ENCODE measurements at regions of chr1 and their contacts with region 1.

Region 1: DNA sequence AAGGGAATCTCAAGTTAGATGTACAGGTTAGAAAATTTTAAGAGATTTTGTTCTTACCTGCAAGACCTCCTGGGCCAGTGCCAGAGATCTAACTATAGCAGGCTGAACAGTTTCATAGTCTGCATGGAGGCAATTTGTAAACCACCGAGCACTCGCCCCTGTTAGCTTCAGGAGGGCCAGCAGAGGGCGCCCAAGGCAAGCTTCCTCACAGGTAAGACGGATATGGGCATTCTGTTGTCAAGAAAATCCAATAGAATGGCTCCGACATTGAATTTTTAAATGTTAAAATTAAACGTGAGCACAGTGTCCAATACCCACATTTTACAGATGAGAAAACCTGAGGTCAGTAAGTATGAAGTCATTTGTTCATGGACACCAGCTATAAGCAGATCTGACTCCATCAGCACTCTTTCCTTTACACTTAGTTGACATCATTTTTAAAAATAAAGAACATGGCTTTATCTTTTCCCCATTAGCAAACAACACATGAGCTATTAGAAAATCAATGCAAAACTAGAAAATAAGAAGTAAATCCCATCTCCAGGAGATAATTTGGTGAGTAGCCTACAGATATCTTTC is 2.2 kb downstream of the REG4 start:
- DNase-seq: peak; percentile 76
- H3K4me3 Mint-ChIP-seq: no peak overlapping the region
- H3K27ac Mint-ChIP-seq: no peak overlapping the region
- H3K4me1 Mint-ChIP-seq: no peaks in the 10 kb centered on the region
- H3K27me3 Mint-ChIP-seq: peaks cover 53% of the 10 kb centered on the region
- CTCF ChIP-seq: peak; percentile 92

Region 2: DNA sequence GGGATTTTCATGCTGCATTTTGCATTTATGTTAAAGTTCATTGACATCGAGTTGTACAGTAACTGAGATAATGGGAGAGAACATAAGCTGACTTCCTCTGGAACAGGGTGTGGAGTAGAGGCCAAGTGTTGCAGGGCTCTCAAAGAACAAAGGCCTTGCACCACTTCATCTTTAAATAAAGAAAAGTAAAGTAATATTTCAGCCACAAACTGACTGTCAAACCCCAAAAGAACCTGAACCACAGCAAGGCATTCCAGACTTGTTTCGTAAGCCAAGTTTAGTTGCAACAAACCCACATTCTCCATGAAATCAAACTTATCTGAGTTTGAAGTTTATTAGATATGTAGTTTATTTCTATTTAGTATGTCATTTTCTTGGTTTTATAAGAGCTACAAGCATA is 21.3 kb before region 1 on chr1:
- CTCF ChIA-PET with region 1: interaction called, 11 read pairs
- POLR2A ChIA-PET with region 1: interaction called, 3 read pairs
- intact Hi-C with region 1: no loop called
- DNase-seq: no peak
- H3K4me3 Mint-ChIP-seq: no peak overlapping the region
- H3K27ac Mint-ChIP-seq: no peak overlapping the region
- H3K4me1 Mint-ChIP-seq: peaks cover 30% of the 10 kb centered on the region
- H3K27me3 Mint-ChIP-seq: no peaks in the 10 kb centered on the region
- CTCF ChIP-seq: no peak

Region 3: DNA sequence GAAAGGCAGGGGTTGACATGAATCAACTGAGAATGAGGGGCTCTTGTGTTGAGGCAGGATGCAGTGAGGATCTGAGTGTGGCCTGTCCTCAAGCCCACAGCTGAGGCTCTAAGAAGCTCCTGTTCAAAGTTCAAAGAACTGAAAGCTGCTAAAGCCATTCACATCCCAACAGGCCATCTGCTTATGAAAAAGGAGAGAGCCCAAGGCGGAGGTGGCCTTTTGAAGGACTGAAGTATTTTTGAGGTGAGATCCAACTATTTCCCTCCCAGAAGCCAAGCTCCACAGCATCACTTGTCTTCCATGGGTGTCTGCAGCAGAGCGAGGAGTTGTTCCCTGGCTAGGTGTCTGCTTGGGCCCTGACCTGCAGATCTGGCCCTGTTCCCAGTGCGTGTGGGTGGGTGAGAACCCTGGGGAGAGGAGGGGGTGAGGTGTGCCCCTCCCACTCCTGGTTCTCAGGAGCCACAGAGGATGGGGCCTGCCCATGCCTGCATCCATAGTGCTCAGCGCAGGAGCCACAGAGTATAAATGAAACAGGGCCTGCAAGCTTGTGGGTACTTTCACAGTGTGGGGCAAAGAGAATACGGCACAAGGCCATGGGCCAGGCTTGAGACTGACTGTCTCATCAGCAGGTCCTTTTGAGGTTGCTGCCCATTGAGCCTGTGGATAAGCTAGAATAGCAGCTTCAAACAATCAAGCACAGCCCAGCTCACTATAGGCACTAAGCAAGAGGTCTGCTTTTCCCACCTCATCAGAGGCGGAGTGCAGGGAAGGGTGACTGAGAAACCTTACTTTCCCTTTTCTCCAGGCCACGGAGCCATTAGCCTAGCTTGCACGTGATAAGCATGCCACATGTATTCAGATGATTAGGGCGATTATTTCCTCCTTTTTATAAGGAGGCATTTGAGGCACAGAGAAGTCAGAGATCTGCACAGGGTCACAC is 13.5 kb before region 1 on chr1:
- CTCF ChIA-PET with region 1: interaction called, 12 read pairs
- POLR2A ChIA-PET with region 1: interaction called, 3 read pairs
- intact Hi-C with region 1: no loop called
- DNase-seq: peak; percentile 32
- H3K4me3 Mint-ChIP-seq: no peak overlapping the region
- H3K27ac Mint-ChIP-seq: no peak overlapping the region
- H3K4me1 Mint-ChIP-seq: peaks cover 6% of the 10 kb centered on the region
- H3K27me3 Mint-ChIP-seq: no peaks in the 10 kb centered on the region
- CTCF ChIP-seq: no peak

Region 4: DNA sequence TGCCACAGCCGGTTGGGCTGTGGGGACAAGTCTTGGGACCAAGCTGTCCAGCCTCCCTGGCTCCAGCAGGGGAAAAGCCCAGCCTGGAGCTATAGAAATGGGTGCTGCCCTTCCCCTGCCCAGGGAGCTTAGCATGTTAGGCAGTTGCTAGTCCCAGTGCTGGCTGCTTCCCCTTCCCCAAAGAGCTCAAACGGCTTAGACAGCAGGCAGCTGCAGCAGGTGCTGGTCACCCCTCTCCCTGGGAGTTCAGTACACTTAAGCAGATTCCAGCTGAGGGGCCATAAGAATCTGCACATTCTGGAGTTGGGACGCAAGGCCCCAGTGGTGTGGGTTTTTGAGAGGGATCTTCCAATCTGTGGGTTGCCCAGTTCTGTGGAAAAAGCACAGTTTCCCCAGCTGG is 13.3 kb after region 1 on chr1:
- CTCF ChIA-PET with region 1: interaction called, 18 read pairs
- POLR2A ChIA-PET with region 1: interaction called, 4 read pairs
- intact Hi-C with region 1: no loop called
- DNase-seq: no peak
- H3K4me3 Mint-ChIP-seq: no peak overlapping the region
- H3K27ac Mint-ChIP-seq: no peak overlapping the region
- H3K4me1 Mint-ChIP-seq: no peaks in the 10 kb centered on the region
- H3K27me3 Mint-ChIP-seq: peaks cover 2% of the 10 kb centered on the region
- CTCF ChIP-seq: no peak

Region 5: GRCh38 chr1:119870917-119871596 is 62.0 kb after region 1 on chr1:
- CTCF ChIA-PET with region 1: interaction called, 10 read pairs
- POLR2A ChIA-PET with region 1: interaction called, 3 read pairs
- intact Hi-C with region 1: loop called (anchors 1 kb)
- DNase-seq: peak; percentile 77
- H3K4me3 Mint-ChIP-seq: no peak overlapping the region
- H3K27ac Mint-ChIP-seq: peak overlapping the region; percentile 59
- H3K4me1 Mint-ChIP-seq: peaks cover 6% of the 10 kb centered on the region
- H3K27me3 Mint-ChIP-seq: no peaks in the 10 kb centered on the region
- CTCF ChIP-seq: peak; percentile 98

Region 6: GRCh38 chr1:119987112-119987511 is 178.1 kb after region 1 on chr1:
- CTCF ChIA-PET with region 1: no interaction called
- POLR2A ChIA-PET with region 1: no interaction called
- intact Hi-C with region 1: no loop called
- DNase-seq: peak; percentile 86
- H3K4me3 Mint-ChIP-seq: peak overlapping the region; percentile 4
- H3K27ac Mint-ChIP-seq: peak overlapping the region; percentile 91
- H3K4me1 Mint-ChIP-seq: peaks cover 44% of the 10 kb centered on the region
- H3K27me3 Mint-ChIP-seq: no peaks in the 10 kb centered on the region
- CTCF ChIP-seq: no peak

Region 7: DNA sequence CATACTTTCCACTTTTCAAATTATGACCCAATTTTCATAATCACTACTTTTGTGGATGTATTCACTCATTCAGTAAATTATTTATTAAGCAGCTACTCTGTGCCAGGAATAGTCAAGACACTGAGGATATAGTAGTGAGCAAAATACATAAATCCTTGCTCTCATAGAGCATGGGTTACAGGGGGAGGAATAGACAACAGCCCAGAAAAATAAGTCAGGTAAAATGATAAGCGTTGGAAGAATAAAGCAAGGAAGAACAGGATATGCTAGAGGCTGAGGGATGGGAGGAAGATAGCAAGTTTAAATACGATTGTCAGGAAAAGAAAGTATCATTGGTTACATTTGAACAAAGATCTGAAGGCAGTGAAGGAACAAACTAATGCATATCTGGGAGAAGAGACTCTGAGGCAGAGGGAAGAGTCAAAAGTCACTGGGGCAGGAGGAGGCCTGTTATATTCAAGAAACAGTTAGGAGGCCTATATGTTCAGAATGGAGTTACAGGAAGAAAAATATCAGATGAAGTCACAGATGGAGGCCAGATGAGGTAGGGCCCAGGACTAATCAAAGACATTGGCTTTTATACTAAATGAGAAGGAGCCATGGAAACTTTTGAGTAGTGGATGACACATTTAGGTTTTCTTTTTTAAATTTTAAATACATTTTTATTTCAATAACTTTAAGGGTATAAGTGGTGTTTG is 324.3 kb after region 1 on chr1:
- CTCF ChIA-PET with region 1: no interaction called
- POLR2A ChIA-PET with region 1: no interaction called
- intact Hi-C with region 1: no loop called
- DNase-seq: no peak
- H3K4me3 Mint-ChIP-seq: no peak overlapping the region
- H3K27ac Mint-ChIP-seq: no peak overlapping the region
- H3K4me1 Mint-ChIP-seq: no peaks in the 10 kb centered on the region
- H3K27me3 Mint-ChIP-seq: no peaks in the 10 kb centered on the region
- CTCF ChIP-seq: no peak